Activated T-helper 2 cell treated with anti-CD3 and anti-CD28 coated beads, Interferon-gamma antibody, Interleukin-2, Interleukin-4, amounts not matched to agents 10 μg/mL and 5 μg/mL and 100 μg/mL, durations not matched to agents 14 hours and 24 hours and 36 hours (primary cell): ENCODE measurements at regions of chr10 and their contacts with region 1.

Region 1: GRCh38 chr10:121927841-121928527 is at the start of gene ATE1:
- DNase-seq: peak; percentile 77
- H3K4me3 Mint-ChIP-seq: peak within 1 kb of the TSS; percentile 94
- H3K27ac Mint-ChIP-seq: peak within 1 kb of the TSS; percentile 98
- H3K4me1 Mint-ChIP-seq: peaks cover 18% of the 10 kb centered on the region
- H3K27me3 Mint-ChIP-seq: no peaks in the 10 kb centered on the region
- total RNA-seq, gene ATE1: 33.6 and 34.9 TPM in 2 replicates

Region 2: DNA sequence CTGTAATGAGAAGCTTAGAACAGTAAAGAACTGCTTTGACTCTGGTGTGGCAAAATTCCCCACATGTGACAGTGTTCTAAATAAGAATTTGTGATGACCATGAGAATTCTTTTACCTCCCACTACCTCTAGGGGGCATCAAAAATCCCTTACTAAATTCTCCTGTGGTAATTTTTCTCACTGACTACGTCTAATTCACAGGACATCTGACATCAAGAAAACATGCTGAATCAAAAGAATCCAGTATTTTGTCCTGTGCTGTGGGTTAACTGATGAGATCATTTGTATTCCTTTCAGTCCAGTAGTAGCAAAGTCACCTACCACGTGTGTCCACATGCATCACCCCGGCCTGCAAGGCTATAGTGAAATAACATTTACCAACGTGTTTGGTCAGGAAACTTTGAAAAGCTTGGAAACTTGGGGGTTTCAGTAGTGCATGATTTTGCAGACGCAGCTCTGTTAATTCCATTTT is 104.0 kb before region 1 on chr10:
- intact Hi-C with region 1: no loop called
- DNase-seq: no peak
- H3K4me3 Mint-ChIP-seq: no peak overlapping the region
- H3K27ac Mint-ChIP-seq: no peak overlapping the region
- H3K4me1 Mint-ChIP-seq: no peaks in the 10 kb centered on the region
- H3K27me3 Mint-ChIP-seq: no peaks in the 10 kb centered on the region

Region 3: DNA sequence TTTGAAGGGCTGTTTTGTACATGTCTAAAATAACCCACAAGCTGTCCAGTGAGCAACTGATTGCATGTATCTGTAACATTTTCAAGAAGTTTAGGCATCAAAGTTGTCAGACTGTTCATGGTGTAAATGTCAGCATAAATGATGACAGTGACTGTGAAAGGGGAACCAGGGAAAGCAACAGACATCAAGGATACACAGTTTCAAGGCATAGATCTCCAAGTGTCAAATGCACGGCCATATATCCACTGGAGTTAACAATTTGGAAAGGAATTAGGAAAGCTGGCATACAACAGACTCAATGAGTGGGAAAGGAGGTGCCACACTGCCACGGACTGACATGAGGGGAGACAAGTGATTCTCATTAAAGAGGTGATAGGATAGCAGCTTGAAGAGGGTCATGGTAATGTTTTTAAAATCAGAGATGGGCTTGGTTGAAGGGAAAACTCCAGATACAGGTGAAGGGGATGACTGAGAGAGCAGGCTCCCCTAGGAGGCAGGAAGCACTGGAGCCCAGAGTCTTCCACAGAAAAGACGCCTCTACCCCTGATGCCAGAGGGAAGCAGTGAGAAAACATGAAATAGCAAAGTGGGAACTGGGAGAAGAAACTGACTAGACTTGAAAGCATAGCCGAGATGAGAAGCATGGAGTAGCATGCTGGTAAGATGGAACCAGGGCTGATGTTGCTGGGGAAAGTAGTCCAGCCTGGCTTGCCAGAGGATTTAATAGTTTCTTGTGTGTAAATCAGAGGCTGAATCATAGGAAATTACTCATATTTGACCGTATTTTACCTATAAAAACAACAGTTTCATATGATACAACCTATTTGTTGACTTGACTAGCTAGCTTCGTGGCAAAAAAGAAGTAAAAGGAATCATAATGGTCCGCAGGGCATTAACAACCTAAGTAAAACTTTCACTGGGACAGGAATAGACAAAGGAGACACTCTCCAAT is 28.4 kb after region 1 on chr10:
- intact Hi-C with region 1: no loop called
- DNase-seq: no peak
- H3K4me3 Mint-ChIP-seq: no peak overlapping the region
- H3K27ac Mint-ChIP-seq: no peak overlapping the region
- H3K4me1 Mint-ChIP-seq: peaks cover 3% of the 10 kb centered on the region
- H3K27me3 Mint-ChIP-seq: no peaks in the 10 kb centered on the region

Region 4: GRCh38 chr10:121974535-121975294 is 46.7 kb after region 1 on chr10 and contains the start of gene NSMCE4A:
- intact Hi-C with region 1: loop called (anchors 1 kb)
- DNase-seq: peak; percentile 67
- H3K4me3 Mint-ChIP-seq: peak within 1 kb of the TSS; percentile 86
- H3K27ac Mint-ChIP-seq: no peak within 1 kb of the TSS
- H3K4me1 Mint-ChIP-seq: peaks cover 12% of the 10 kb centered on the region
- H3K27me3 Mint-ChIP-seq: no peaks in the 10 kb centered on the region
- total RNA-seq, gene NSMCE4A: 67.5 and 83.1 TPM in 2 replicates

Region 5: GRCh38 chr10:122191936-122192541 is 264.1 kb after region 1 on chr10:
- intact Hi-C with region 1: no loop called
- DNase-seq: no peak
- H3K4me3 Mint-ChIP-seq: no peak overlapping the region
- H3K27ac Mint-ChIP-seq: no peak overlapping the region
- H3K4me1 Mint-ChIP-seq: no peaks in the 10 kb centered on the region
- H3K27me3 Mint-ChIP-seq: no peaks in the 10 kb centered on the region